MCF 10A (cell line): ENCODE measurements at regions of chr17 and their contacts with region 1.

Region 1: DNA sequence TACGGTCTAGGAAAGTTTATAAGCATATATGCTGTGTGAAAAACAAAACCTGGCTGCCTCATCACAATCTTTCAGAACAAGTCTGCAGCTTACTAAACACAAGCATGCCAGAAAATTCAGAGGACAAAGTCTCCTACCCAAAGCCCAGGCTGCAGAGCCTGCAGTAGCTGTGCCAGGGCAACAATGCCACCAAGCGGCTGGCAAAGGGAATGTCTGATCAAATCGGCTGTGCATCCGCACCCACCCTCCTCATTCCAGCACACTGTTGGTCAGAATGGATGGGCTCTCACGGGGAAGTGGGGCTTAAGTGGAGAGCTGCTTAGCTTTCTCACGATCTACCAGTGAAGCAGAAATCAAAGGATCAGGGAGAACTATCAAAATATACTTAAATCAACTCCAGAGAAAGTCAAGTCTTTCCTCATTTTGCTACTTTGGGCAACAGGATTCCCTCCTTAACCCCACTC is 73.5 kb downstream of the CYTH1 start:
- DNase-seq: peak; percentile 79
- H3K4me3 Mint-ChIP-seq: no peak overlapping the region
- H3K27ac Mint-ChIP-seq: no peak overlapping the region
- H3K4me1 Mint-ChIP-seq: peaks cover 6% of the 10 kb centered on the region
- H3K27me3 Mint-ChIP-seq: no peaks in the 10 kb centered on the region
- CTCF ChIP-seq: peak; percentile 85

Region 2: GRCh38 chr17:78497115-78497540 is 211.4 kb before region 1 on chr17:
- CTCF ChIA-PET with region 1: interaction called, 87 read pairs
- POLR2A ChIA-PET with region 1: interaction called, 9 read pairs
- intact Hi-C with region 1: loop called (anchors 1 kb)
- DNase-seq: peak; percentile 84
- H3K4me3 Mint-ChIP-seq: no peak overlapping the region
- H3K27ac Mint-ChIP-seq: no peak overlapping the region
- H3K4me1 Mint-ChIP-seq: no peaks in the 10 kb centered on the region
- H3K27me3 Mint-ChIP-seq: no peaks in the 10 kb centered on the region
- CTCF ChIP-seq: peak; percentile 73

Region 3: GRCh38 chr17:78592991-78593329 is 115.6 kb before region 1 on chr17:
- CTCF ChIA-PET with region 1: interaction called, 5 read pairs
- POLR2A ChIA-PET with region 1: no interaction called
- intact Hi-C with region 1: loop called (anchors 1 kb)
- DNase-seq: no peak
- H3K4me3 Mint-ChIP-seq: peak overlapping the region; percentile 59
- H3K27ac Mint-ChIP-seq: peak overlapping the region; percentile 86
- H3K4me1 Mint-ChIP-seq: peaks cover 13% of the 10 kb centered on the region
- H3K27me3 Mint-ChIP-seq: no peaks in the 10 kb centered on the region
- CTCF ChIP-seq: no peak

Region 4: DNA sequence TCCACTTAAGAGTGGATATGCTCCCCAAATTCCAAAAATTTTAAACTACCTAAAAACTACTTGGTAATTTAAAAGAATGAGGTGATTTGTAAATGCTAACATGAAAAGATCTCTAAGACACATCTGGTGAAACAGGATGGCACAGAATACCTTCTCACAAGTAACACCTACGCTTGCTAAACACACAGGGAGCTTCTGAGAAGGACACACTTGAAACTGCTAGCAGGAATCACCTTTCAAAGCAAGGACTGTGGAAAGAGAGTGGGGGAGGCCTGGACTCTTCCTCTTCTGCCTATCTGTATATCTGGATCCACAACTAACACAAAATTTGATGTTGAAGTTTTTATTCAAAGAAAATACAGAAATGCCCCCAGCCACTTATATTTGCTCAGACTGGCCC is 21.1 kb after region 1 on chr17:
- CTCF ChIA-PET with region 1: interaction called, 10 read pairs
- POLR2A ChIA-PET with region 1: interaction called, 131 read pairs
- intact Hi-C with region 1: no loop called
- DNase-seq: no peak
- H3K4me3 Mint-ChIP-seq: no peak overlapping the region
- H3K27ac Mint-ChIP-seq: peak overlapping the region; percentile 28
- H3K4me1 Mint-ChIP-seq: peaks cover 26% of the 10 kb centered on the region
- H3K27me3 Mint-ChIP-seq: no peaks in the 10 kb centered on the region
- CTCF ChIP-seq: no peak

Region 5: GRCh38 chr17:78745407-78746088 is 37.0 kb after region 1 on chr17:
- CTCF ChIA-PET with region 1: interaction called, 14 read pairs
- POLR2A ChIA-PET with region 1: interaction called, 3 read pairs
- intact Hi-C with region 1: loop called (anchors 2 kb)
- DNase-seq: peak; percentile 59
- H3K4me3 Mint-ChIP-seq: no peak overlapping the region
- H3K27ac Mint-ChIP-seq: no peak overlapping the region
- H3K4me1 Mint-ChIP-seq: peaks cover 34% of the 10 kb centered on the region
- H3K27me3 Mint-ChIP-seq: no peaks in the 10 kb centered on the region
- CTCF ChIP-seq: peak; percentile 58